ENCODE measurements at regions of chr4 and their contacts with region 1.

Region 1: GRCh38 chr4:82462415-82462831 is 32.0 kb downstream of the ENOPH1 start:
- DNase-seq: peak; percentile 89 to 92 (median 90)
- ATAC-seq: peak; percentile 97
- H3K4me3 ChIP-seq: no peak overlapping the region
- H3K27ac ChIP-seq: no peak overlapping the region
- H3K4me1 ChIP-seq: no peaks in the 10 kb centered on the region
- H3K27me3 ChIP-seq: no peaks in the 10 kb centered on the region
- CTCF ChIP-seq: peak; percentile 55 to 80 (median 73)
- EP300 ChIP-seq: no peak
- POLR2A ChIP-seq: no peak
- RAD21 ChIP-seq: peak; percentile 36 to 48; a peak in 3 of 4 replicates

Region 2: GRCh38 chr4:82599336-82599735 is 136.9 kb after region 1 on chr4:
- CTCF ChIA-PET with region 1: no interaction called
- POLR2A ChIA-PET with region 1: no interaction called
- in situ Hi-C with region 1: no loop called
- intact Hi-C with region 1: loop called (anchors 5 kb)
- DNase-seq: peak in 2 of 4 experiments; percentile 20 to 28
- ATAC-seq: peak; percentile 91
- H3K4me3 ChIP-seq: no peak overlapping the region
- H3K27ac ChIP-seq: no peak overlapping the region
- H3K4me1 ChIP-seq: no peaks in the 10 kb centered on the region
- H3K27me3 ChIP-seq: peaks cover 7% of the 10 kb centered on the region in 2 experiments; a peak in 1 of 5 replicates
- CTCF ChIP-seq: peak; percentile 17 to 37 (median 32); a peak in 4 of 6 replicates
- EP300 ChIP-seq: no peak
- POLR2A ChIP-seq: no peak
- RAD21 ChIP-seq: peak in 1 of 2 experiments; percentile 42; a peak in 2 of 4 replicates

Region 3: DNA sequence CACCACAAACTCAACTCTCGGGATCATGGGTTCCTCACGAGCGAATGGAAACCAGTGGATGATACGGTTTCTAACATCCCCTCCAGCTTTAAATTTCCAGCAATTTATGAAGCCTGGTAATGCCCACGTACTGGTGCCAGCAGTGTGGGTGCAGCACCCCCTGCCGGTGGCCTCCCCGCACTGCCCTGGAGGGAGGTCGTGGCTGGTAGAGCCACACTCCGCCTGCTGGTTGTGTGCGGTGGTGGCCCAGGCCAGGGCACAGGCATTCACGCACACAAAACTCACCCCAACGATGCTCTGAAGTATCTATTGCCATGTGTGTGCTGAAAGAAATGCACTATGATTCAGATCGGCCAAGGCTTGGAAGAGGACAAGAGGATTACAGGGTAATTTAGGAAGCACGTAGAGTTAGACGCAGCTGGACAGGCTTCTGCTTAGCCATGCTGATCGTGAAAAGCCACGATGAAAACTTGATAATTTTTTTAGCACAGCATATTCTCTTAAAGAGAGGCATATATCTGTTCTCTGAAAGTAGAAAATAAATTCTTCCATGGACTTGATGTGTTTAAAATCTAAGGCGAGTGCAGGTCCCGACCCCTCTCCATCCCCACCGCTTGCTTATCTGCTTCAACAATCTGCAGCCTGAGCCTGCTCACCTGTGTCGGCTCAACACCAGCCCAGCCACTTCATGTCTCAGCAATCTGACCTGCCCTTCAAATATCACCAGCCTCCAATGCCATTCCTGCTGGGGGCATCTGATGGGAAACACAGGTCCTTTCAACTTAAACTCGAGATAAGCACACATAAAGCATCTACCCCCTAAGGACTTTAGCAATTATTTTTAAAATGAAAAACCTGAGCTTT is 277.1 kb after region 1 on chr4:
- CTCF ChIA-PET with region 1: interaction called, 27 read pairs
- POLR2A ChIA-PET with region 1: no interaction called
- in situ Hi-C with region 1: loop called (anchors 5 kb)
- intact Hi-C with region 1: loop called (anchors 1 kb)
- DNase-seq: peak; percentile 71 to 89 (median 86)
- ATAC-seq: peak; percentile 100
- H3K4me3 ChIP-seq: no peak overlapping the region
- H3K27ac ChIP-seq: no peak overlapping the region
- H3K4me1 ChIP-seq: 0 out of 5 replicates have a peak, but pooled peaks cover 0 to 2% of the 10 kb centered on the region in 2 experiments
- H3K27me3 ChIP-seq: peaks cover 4 to 26% of the 10 kb centered on the region in 2 experiments; a peak in 4 of 5 replicates
- CTCF ChIP-seq: peak; percentile 98 to 100 (median 99)
- EP300 ChIP-seq: no peak
- POLR2A ChIP-seq: no peak
- RAD21 ChIP-seq: peak; percentile 75 to 83

Measured in K562 (cell line).